SK-N-SH (cell line): ENCODE measurements at regions of chr10 and their contacts with region 1.

Region 1: DNA sequence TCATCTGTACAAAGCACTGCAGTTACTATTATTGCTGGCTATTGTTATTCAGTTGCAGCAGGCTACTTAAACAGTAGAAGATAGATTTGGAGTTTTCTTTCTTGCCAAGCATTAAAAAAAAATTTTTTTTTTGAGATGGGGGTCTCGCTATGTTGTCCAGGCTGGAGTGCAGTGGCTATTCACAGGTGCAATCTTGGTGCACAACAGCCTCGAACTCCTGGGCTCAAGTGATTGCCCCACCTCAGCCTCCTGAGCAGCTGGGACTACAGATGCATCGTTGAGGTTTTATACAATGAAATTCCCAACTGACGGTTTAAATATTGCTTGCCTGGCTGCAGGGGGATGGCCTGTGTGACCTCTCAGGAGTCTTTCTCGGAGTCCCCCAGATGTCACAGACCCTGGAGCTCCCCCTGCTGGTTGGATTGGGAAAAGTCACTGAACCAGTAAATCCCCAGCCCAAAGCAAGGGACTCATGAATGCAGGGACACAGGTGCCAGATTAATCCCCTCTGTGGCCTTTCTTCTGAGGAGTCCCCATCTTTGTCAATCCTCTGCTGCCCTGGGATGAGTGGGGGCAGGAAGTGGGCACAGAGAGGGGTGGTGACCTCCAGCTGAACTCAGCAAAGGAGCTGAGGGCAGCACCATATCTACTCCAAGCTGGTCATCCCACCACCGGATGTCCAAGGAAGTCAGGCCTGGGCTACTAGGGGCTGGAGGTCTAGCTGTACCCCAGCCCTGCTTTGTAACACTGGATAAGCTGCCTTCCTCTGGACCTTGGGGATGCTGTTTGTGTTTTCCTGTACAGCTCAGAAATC is 149.6 kb downstream of the C10orf105 start:
- DNase-seq: peak; percentile 86
- H3K4me3 ChIP-seq: peak overlapping the region in 1 of 2 experiments; percentile 44; a peak in 1 of 4 replicates
- H3K27ac ChIP-seq: no peak overlapping the region
- H3K4me1 ChIP-seq: no peaks in the 10 kb centered on the region; a peak in 1 of 4 replicates
- H3K27me3 ChIP-seq: peaks cover 3% of the 10 kb centered on the region
- CTCF ChIP-seq: peak; percentile 84
- EP300 ChIP-seq: no peak
- RAD21 ChIP-seq: peak; percentile 80

Region 2: GRCh38 chr10:71396084-71396720 is 173.8 kb before region 1 on chr10:
- CTCF ChIA-PET with region 1: interaction called, 223 read pairs
- POLR2A ChIA-PET with region 1: no interaction called
- DNase-seq: peak; percentile 90
- H3K4me3 ChIP-seq: peak overlapping the region in 1 of 2 experiments; percentile 41; a peak in 2 of 4 replicates
- H3K27ac ChIP-seq: no peak overlapping the region
- H3K4me1 ChIP-seq: peaks cover 0 to 9% of the 10 kb centered on the region in 2 experiments; a peak in 1 of 4 replicates
- H3K27me3 ChIP-seq: peaks cover 48% of the 10 kb centered on the region
- CTCF ChIP-seq: no peak
- EP300 ChIP-seq: no peak
- RAD21 ChIP-seq: peak; percentile 83

Region 3: GRCh38 chr10:71486484-71487114 is 83.4 kb before region 1 on chr10:
- CTCF ChIA-PET with region 1: interaction called, 30 read pairs
- POLR2A ChIA-PET with region 1: no interaction called
- DNase-seq: peak; percentile 64
- H3K4me3 ChIP-seq: peak overlapping the region in 1 of 2 experiments; percentile 51; a peak in 1 of 4 replicates
- H3K27ac ChIP-seq: no peak overlapping the region
- H3K4me1 ChIP-seq: no peaks in the 10 kb centered on the region
- H3K27me3 ChIP-seq: no peaks in the 10 kb centered on the region; the same call in 1 of the 2 replicates
- CTCF ChIP-seq: peak; percentile 54
- EP300 ChIP-seq: no peak
- RAD21 ChIP-seq: peak; percentile 77

Region 4: DNA sequence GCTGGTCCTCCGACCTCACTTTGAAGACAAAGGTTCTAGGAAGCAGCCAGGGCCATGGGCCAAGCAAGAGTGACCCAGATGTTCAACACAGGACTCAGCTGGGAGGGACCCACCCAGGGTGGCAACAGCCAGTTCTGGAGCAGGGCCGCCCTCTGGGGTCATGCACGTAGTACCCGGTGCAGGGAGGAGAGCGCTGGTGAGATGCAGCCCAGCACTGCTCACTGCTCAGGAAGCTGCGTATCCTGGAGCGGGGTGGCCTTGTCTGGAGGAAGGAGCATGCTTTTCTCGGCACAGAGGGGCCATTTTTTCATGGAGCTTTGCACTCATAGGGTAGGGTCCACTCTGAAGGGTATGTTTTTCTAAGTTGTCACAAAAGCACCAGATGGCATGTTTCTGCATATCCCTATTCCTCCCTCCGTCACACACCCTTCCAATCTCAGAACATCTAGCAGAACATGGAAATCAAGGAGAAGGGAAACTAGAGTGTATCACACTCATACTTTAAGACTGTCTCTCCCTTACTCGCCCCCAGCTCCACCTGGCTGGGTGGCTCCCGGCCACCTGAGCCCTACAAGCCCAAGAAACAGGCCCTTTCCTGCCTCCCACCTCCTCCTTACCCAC is 40.7 kb before region 1 on chr10:
- CTCF ChIA-PET with region 1: interaction called, 11 read pairs
- POLR2A ChIA-PET with region 1: no interaction called
- DNase-seq: no peak
- H3K4me3 ChIP-seq: no peak overlapping the region
- H3K27ac ChIP-seq: no peak overlapping the region
- H3K4me1 ChIP-seq: peaks cover 0 to 20% of the 10 kb centered on the region in 2 experiments; a peak in 1 of 4 replicates
- H3K27me3 ChIP-seq: no peaks in the 10 kb centered on the region
- CTCF ChIP-seq: no peak
- EP300 ChIP-seq: no peak
- RAD21 ChIP-seq: no peak

Region 5: DNA sequence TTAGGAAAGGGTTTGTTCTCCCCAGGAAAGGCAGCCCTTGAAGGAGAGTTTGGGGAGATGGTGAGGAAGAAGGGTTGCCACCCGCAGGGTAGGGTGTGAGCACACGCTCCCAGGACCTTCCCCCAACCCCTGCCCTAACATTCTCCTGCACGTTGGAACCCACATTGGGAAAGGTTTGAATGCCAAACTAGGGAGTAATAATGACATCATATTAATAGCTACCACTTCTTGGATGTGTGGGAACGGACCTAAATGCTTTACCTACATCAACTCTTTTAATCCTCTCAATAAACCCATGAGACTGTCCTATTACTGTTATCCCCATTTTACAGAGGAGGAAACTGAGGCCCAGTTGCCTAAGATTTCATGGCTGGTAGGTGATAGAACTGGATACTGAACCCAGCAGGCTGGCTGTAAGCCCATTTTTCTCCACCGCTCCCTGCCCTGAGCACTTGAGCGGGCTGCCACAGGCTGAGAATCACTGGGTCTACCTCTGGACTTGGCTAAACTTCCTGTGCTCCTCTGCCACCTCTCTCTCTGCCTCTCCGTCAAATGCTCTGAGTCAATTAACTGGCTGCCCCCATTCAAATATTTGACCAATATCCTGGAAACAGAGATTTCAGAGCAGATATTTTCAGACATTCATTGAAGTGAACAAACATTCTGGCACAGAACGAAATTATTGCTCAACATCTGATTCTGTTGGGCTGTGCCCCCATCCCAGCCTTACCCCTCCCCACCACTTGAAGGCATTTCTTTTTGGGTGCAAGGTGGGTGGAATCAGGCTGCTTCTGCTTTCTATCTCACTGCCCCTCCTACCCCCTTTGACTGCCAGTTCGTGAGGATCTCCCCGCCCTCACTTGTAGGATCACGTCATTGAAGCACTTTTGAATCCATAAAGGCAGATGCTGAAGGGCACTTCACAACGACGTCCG is 19.9 kb after region 1 on chr10:
- CTCF ChIA-PET with region 1: interaction called, 23 read pairs
- POLR2A ChIA-PET with region 1: no interaction called
- DNase-seq: no peak
- H3K4me3 ChIP-seq: no peak overlapping the region
- H3K27ac ChIP-seq: no peak overlapping the region
- H3K4me1 ChIP-seq: no peaks in the 10 kb centered on the region
- H3K27me3 ChIP-seq: peaks cover 11% of the 10 kb centered on the region
- CTCF ChIP-seq: no peak
- EP300 ChIP-seq: no peak
- RAD21 ChIP-seq: no peak

Region 6: GRCh38 chr10:71740069-71740468 is 170.1 kb after region 1 on chr10:
- CTCF ChIA-PET with region 1: no interaction called
- POLR2A ChIA-PET with region 1: no interaction called
- DNase-seq: no peak
- H3K4me3 ChIP-seq: no peak overlapping the region
- H3K27ac ChIP-seq: no peak overlapping the region; a peak in 1 of 4 replicates
- H3K4me1 ChIP-seq: peaks cover 0 to 32% of the 10 kb centered on the region in 2 experiments; a peak in 1 of 4 replicates
- H3K27me3 ChIP-seq: no peaks in the 10 kb centered on the region
- CTCF ChIP-seq: no peak
- EP300 ChIP-seq: no peak
- RAD21 ChIP-seq: no peak

Region 7: GRCh38 chr10:71921324-71922027 is 351.5 kb after region 1 on chr10:
- CTCF ChIA-PET with region 1: no interaction called
- POLR2A ChIA-PET with region 1: no interaction called
- DNase-seq: peak; percentile 80
- H3K4me3 ChIP-seq: no peak overlapping the region
- H3K27ac ChIP-seq: peak overlapping the region in 1 of 2 experiments; percentile 50; a peak in 2 of 4 replicates
- H3K4me1 ChIP-seq: peaks cover 5 to 17% of the 10 kb centered on the region in 2 experiments; a peak in 3 of 4 replicates
- H3K27me3 ChIP-seq: no peaks in the 10 kb centered on the region; the same call in 1 of the 2 replicates
- CTCF ChIP-seq: no peak
- EP300 ChIP-seq: no peak
- RAD21 ChIP-seq: no peak